ENCODE measurements at regions of chr1 and their contacts with region 1.

Region 1: GRCh38 chr1:27556781-27557595 is 47.0 kb downstream of the AHDC1 start:
- DNase-seq: peak; percentile 77
- ATAC-seq: peak; percentile 85
- H3K4me3 ChIP-seq: peak overlapping the region; percentile 26 to 30
- H3K27ac ChIP-seq: peak overlapping the region; percentile 87
- H3K4me1 ChIP-seq: peaks cover 23 to 48% of the 10 kb centered on the region in 2 experiments
- H3K27me3 ChIP-seq: no peaks in the 10 kb centered on the region
- CTCF ChIP-seq: peak in 2 of 3 experiments; percentile 86 to 90; a peak in 5 of 6 replicates
- POLR2A ChIP-seq: no peak
- RAD21 ChIP-seq: peak; percentile 86

Region 2: DNA sequence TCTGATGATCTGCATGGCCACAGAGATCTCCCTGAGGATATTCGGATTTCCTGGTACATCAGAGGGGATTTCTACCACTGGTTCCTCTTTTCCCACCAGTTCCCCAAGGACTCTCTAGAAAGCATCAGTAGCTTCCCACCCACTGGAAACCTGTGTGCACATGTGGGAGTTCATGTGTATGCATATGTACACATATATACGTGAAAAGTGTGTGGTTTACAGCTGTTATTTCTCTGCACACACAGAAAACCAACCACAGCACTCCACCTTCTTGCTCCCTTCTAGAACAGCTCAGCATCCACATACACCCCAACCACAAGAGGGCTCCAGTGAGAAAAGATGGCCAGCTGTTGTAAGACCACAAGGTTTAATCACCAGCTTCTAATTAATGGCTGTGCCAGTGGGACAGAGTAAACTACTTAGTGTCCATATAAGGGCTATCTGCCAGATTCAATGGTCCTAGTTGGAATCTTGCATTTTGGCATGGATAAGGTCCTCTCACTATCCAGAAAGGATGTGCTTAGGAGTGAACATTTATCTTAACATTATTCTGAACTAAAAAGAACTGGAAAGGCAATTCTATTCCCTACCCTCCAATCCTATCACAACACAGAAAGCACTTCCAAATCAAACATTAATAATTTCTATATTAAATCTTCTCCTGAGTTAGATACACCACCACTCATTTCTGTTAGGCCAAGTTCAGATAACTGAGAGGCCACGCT is 140.4 kb before region 1 on chr1:
- CTCF ChIA-PET with region 1: interaction called, 16 read pairs
- POLR2A ChIA-PET with region 1: no interaction called
- RAD21 ChIA-PET with region 1: interaction called in 1 of 2 experiments, 4 read pairs
- intact Hi-C with region 1: no loop called
- DNase-seq: peak; percentile 55
- ATAC-seq: peak; percentile 90
- H3K4me3 ChIP-seq: no peak overlapping the region
- H3K27ac ChIP-seq: no peak overlapping the region
- H3K4me1 ChIP-seq: no peaks in the 10 kb centered on the region
- H3K27me3 ChIP-seq: no peaks in the 10 kb centered on the region
- CTCF ChIP-seq: peak; percentile 52 to 84 (median 79); a peak in 5 of 6 replicates
- POLR2A ChIP-seq: no peak
- RAD21 ChIP-seq: peak; percentile 74

Region 3: DNA sequence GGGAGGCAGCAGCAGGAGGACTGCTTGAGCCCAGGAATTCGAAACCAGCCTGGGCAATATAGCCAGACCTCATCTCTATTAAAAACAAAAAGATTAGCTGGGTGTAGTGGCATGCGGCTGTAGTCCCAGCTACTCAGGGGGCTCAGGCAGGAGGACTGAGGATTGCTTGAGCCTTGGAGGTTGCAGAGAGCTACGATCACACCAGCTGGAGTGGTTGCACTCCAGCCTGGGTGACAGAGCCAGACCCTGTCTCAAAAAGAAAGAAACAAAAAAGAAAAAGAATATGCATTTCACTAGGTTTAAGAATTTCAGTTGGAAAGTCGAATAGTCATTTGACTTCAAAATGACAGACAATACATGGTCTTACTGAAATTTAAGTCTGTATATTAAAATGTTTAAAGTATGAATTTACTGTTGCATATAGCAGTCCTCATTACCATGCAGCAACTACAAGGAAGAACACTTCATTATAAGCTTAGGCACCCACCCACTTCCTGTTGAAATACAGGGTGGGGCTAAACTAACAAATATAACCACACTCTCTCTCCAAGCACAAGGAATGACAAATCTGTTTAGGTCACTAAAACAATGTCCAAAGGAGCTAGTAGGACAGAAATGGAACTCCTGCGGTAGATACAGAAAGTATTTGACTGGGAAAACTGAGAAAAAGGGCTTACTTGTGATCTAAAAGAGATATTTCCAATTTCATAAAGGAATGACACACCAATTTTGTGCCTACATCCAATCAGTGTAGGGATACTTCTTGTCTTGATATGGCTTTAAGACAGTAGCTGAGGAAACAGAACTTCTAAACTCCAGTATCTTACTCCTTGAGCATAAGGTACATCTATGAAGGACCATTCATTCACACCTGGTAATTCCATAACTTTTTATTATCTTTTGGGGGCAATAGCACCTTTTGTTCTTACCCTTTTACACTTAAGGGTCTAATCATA is 120.5 kb before region 1 on chr1:
- CTCF ChIA-PET with region 1: interaction called, 11 read pairs
- POLR2A ChIA-PET with region 1: no interaction called
- RAD21 ChIA-PET with region 1: no interaction called
- intact Hi-C with region 1: no loop called
- DNase-seq: peak; percentile 3
- ATAC-seq: peak; percentile 67
- H3K4me3 ChIP-seq: peak overlapping the region in 1 of 2 experiments; percentile 2; a peak in 1 of 4 replicates
- H3K27ac ChIP-seq: no peak overlapping the region; the same call in 1 of the 2 replicates
- H3K4me1 ChIP-seq: peaks cover 8 to 34% of the 10 kb centered on the region in 2 experiments
- H3K27me3 ChIP-seq: no peaks in the 10 kb centered on the region
- CTCF ChIP-seq: no peak
- POLR2A ChIP-seq: no peak
- RAD21 ChIP-seq: no peak

Region 4: GRCh38 chr1:27542408-27543273 is 14.3 kb before region 1 on chr1:
- CTCF ChIA-PET with region 1: interaction called, 27 read pairs
- POLR2A ChIA-PET with region 1: interaction called, 8 read pairs
- RAD21 ChIA-PET with region 1: interaction called in 1 of 2 experiments, 3 read pairs
- intact Hi-C with region 1: no loop called
- DNase-seq: peak; percentile 99
- ATAC-seq: peak; percentile 82
- H3K4me3 ChIP-seq: peak overlapping the region; percentile 33 to 49
- H3K27ac ChIP-seq: peak overlapping the region; percentile 91
- H3K4me1 ChIP-seq: peaks cover 65 to 90% of the 10 kb centered on the region in 2 experiments
- H3K27me3 ChIP-seq: no peaks in the 10 kb centered on the region
- CTCF ChIP-seq: no peak
- POLR2A ChIP-seq: no peak
- RAD21 ChIP-seq: no peak

Region 5: DNA sequence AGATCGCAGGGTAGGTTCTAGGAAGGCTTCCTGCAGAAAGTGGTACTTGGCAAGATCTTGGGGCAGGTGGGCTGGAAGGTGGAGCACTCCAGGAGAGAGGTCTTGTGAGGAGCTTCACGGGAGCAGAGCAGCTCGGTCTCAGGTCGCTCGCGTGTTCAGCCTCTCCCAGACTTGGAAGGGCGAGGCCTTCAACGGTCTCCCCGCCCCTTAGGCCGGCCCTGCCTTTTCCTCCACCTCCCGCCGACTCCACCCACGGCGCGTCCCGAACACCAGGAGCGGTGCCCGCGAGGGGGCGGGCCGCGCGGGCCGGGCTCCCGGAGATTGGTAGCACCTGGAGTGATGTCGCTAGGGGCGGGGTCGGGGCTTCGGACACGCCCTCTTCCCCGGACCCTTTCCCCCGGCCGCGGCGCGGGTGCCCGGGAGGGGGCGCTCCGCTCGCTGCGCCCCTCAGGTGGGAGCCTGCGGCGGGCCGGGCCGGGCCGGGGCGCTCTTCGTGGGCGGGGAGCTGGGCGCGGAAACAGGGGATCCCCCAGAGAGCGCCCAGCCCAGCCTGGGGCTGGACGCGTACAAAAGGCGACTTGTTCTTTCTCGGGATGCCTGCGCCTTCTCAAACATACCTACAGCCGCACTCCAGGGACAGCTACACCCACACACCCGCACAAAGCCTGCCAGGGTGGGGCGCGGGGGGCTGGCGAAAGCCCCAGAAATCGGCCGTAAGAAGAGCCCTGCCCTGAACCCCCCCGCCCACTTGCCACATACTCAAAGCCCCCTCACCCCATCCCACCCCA is 11.5 kb after region 1 on chr1:
- CTCF ChIA-PET with region 1: interaction called, 39 read pairs
- POLR2A ChIA-PET with region 1: interaction called, 8 read pairs
- RAD21 ChIA-PET with region 1: no interaction called
- intact Hi-C with region 1: no loop called
- DNase-seq: peak; percentile 89
- ATAC-seq: peak; percentile 96
- H3K4me3 ChIP-seq: peak overlapping the region; percentile 26 to 51
- H3K27ac ChIP-seq: peak overlapping the region; percentile 58
- H3K4me1 ChIP-seq: peaks cover 77 to 98% of the 10 kb centered on the region in 2 experiments
- H3K27me3 ChIP-seq: no peaks in the 10 kb centered on the region
- CTCF ChIP-seq: peak in 2 of 3 experiments; percentile 70 to 71; a peak in 4 of 6 replicates
- POLR2A ChIP-seq: no peak
- RAD21 ChIP-seq: no peak

Region 6: GRCh38 chr1:27589841-27590426 is 32.9 kb after region 1 on chr1:
- CTCF ChIA-PET with region 1: interaction called, 12 read pairs
- POLR2A ChIA-PET with region 1: no interaction called
- RAD21 ChIA-PET with region 1: no interaction called
- intact Hi-C with region 1: no loop called
- DNase-seq: no peak
- ATAC-seq: peak; percentile 33; the same call in 1 of the 2 replicates
- H3K4me3 ChIP-seq: no peak overlapping the region
- H3K27ac ChIP-seq: peak overlapping the region; percentile 47
- H3K4me1 ChIP-seq: peaks cover 23 to 32% of the 10 kb centered on the region in 2 experiments
- H3K27me3 ChIP-seq: no peaks in the 10 kb centered on the region
- CTCF ChIP-seq: no peak
- POLR2A ChIP-seq: no peak
- RAD21 ChIP-seq: no peak

Region 7: DNA sequence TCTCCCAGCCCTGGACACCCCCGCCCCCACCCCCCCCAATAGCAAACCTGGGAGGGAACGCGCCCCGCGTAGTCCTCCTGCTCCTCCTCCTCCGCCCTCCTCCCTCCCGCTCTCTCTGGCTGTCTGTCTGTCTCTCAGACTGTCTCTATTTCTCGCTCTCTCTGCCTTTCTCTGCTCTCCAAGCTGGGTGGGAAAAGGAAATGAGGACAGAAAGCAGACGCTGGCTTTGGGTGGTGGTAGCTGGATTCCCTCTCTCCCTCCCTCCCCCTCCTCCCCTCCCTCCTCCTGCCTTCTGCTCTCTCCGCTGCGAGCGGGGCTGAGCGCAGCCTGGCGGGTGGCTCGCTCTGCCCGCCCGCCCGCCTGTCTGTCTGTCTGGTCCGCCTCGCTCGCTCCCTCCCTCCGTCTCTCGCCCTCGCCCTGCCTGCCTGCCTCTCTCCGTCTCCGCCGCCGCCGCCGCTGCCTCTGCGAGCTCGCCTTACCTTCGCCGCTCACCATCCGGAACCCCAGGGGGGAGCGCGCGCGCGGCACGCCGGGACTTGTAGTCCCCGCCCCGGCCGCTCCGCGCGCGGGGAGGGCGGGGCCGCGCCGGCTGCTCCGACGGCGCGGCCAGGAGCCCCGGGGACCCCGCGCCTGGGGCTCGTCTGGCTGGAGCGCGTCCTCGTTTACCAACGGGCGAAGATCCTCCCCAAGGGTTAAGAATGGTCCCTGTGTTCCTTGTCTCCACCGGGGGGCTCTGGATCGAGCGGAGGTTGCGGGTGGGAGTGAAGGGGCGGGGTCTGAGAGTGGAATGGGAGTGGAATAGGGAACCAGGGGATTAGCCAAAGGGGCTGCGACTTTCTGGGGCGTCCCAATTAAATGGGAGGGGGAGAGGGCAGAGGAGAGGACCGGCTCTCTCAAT is 46.9 kb after region 1 on chr1 and contains the start of gene AHDC1:
- CTCF ChIA-PET with region 1: interaction called, 49 read pairs
- POLR2A ChIA-PET with region 1: interaction called, 8 read pairs
- RAD21 ChIA-PET with region 1: interaction called, 19 to 21 read pairs
- intact Hi-C with region 1: loop called (anchors 1 kb)
- DNase-seq: peak; percentile 65
- ATAC-seq: peak; percentile 74
- H3K4me3 ChIP-seq: peak within 1 kb of the TSS; percentile 85 to 95
- H3K27ac ChIP-seq: peak within 1 kb of the TSS; percentile 68
- H3K4me1 ChIP-seq: peaks cover 40 to 70% of the 10 kb centered on the region in 2 experiments
- H3K27me3 ChIP-seq: no peaks in the 10 kb centered on the region
- CTCF ChIP-seq: no peak
- POLR2A ChIP-seq: peak; percentile 34
- RAD21 ChIP-seq: no peak
- total RNA-seq, gene AHDC1: 33.7 TPM

Region 8: GRCh38 chr1:27816921-27817630 is 260.1 kb after region 1 on chr1:
- CTCF ChIA-PET with region 1: no interaction called
- POLR2A ChIA-PET with region 1: no interaction called
- RAD21 ChIA-PET with region 1: no interaction called
- intact Hi-C with region 1: no loop called
- DNase-seq: no peak
- ATAC-seq: no peak
- H3K4me3 ChIP-seq: no peak overlapping the region
- H3K27ac ChIP-seq: no peak overlapping the region
- H3K4me1 ChIP-seq: no peaks in the 10 kb centered on the region
- H3K27me3 ChIP-seq: no peaks in the 10 kb centered on the region
- CTCF ChIP-seq: no peak
- POLR2A ChIP-seq: no peak
- RAD21 ChIP-seq: no peak

Measured in HCT116 (cell line).